ENCODE measurements at regions of chr11 and their contacts with region 1.

Region 1: GRCh38 chr11:93784152-93784934 is at the start of gene MED17:
- DNase-seq: peak; percentile 89 to 92 (median 90)
- H3K4me3 ChIP-seq: peak within 1 kb of the TSS; percentile 96
- H3K27ac ChIP-seq: peak within 1 kb of the TSS; percentile 37 to 80
- H3K4me1 ChIP-seq: peaks cover 8% of the 10 kb centered on the region
- H3K27me3 ChIP-seq: no peaks in the 10 kb centered on the region
- CTCF ChIP-seq: peak in 1 of 3 donors; percentile 58
- EP300 ChIP-seq: no peak
- POLR2A ChIP-seq: peak; percentile 76
- total RNA-seq, gene MED17: 26.9 to 38.3 (median 33.4) TPM

Region 2: GRCh38 chr11:93741094-93741881 is 43.1 kb before region 1 on chr11 and contains the starts of genes C11orf54 and TAF1D:
- intact Hi-C with region 1: loop called in 3 of 4 experiments (anchors 5 kb)
- DNase-seq: peak; percentile 97 to 99 (median 98)
- H3K4me3 ChIP-seq: peak within 1 kb of the TSS; percentile 87
- H3K27ac ChIP-seq: peak within 1 kb of the TSS; percentile 76 to 92
- H3K4me1 ChIP-seq: peaks cover 2% of the 10 kb centered on the region
- H3K27me3 ChIP-seq: no peaks in the 10 kb centered on the region
- CTCF ChIP-seq: peak in 2 of 3 donors; percentile 6 to 9
- EP300 ChIP-seq: no peak
- POLR2A ChIP-seq: peak; percentile 72
- total RNA-seq, gene C11orf54: 28.4 to 48.0 (median 36.0) TPM
- total RNA-seq, gene TAF1D: 73.7 to 155 (median 109) TPM

Region 3: GRCh38 chr11:93857413-93858120 is 73.2 kb after region 1 on chr11:
- intact Hi-C with region 1: no loop called
- DNase-seq: no peak
- H3K4me3 ChIP-seq: no peak overlapping the region
- H3K27ac ChIP-seq: no peak overlapping the region
- H3K4me1 ChIP-seq: no peaks in the 10 kb centered on the region
- H3K27me3 ChIP-seq: no peaks in the 10 kb centered on the region
- CTCF ChIP-seq: no peak
- EP300 ChIP-seq: no peak
- POLR2A ChIP-seq: no peak

Region 4: DNA sequence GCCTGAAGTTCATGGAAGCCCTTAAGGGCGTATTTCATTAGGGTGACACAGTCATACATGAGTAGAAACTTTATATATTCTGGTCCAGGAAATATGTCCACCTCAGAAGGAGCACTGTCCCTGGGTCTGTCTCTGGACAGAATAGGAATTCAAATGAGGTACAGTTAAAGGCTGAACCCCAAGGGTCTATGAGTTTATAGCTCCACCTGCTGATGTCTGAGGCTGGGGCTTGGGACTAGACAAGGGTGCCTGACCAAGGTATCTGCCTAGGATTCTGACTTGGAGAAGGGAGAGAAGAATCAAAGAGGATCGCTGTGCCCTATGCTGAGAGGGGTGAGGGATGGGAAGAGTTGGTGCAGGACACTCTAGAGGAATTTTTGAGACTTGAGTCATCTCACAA is 251.8 kb after region 1 on chr11:
- intact Hi-C with region 1: no loop called
- DNase-seq: no peak
- H3K4me3 ChIP-seq: no peak overlapping the region
- H3K27ac ChIP-seq: no peak overlapping the region
- H3K4me1 ChIP-seq: no peaks in the 10 kb centered on the region
- H3K27me3 ChIP-seq: no peaks in the 10 kb centered on the region
- CTCF ChIP-seq: no peak
- EP300 ChIP-seq: no peak
- POLR2A ChIP-seq: no peak

Region 5: GRCh38 chr11:94525546-94526324 is 741.4 kb after region 1 on chr11:
- intact Hi-C with region 1: no loop called
- DNase-seq: peak; percentile 22 to 60 (median 55)
- H3K4me3 ChIP-seq: no peak overlapping the region
- H3K27ac ChIP-seq: no peak overlapping the region
- H3K4me1 ChIP-seq: no peaks in the 10 kb centered on the region
- H3K27me3 ChIP-seq: no peaks in the 10 kb centered on the region
- CTCF ChIP-seq: no peak
- EP300 ChIP-seq: no peak
- POLR2A ChIP-seq: no peak